Heart right ventricle (tissue), 16 donors: ENCODE measurements at regions of chr1 and their contacts with region 1.

Region 1: DNA sequence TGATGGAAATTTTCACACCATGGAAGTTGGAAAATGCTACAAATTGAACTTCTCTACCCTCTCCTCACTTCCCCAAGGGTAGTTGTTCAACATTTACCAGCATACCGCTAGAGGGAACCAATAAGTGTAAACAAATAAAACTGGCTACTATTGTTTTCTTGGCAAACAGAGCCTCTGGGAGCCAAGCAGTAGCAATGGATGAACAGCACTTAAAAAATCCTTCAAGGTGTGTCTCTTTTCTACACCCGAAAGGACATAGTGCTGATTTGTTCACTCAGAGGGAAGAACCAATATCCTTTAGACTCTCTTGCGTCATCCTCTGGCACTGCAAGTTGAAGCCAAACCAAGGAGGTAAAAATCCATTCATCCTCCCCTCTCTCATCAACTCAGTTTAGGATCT is 161.5 kb downstream of the TBX15 start:
- DNase-seq: no peak
- ATAC-seq: no peak
- H3K4me3 ChIP-seq: no peak overlapping the region
- H3K27ac ChIP-seq: no peak overlapping the region
- H3K4me1 ChIP-seq: no peaks in the 10 kb centered on the region
- H3K27me3 ChIP-seq: no peaks in the 10 kb centered on the region
- CTCF ChIP-seq: no peak

Region 2: GRCh38 chr1:118902711-118903191 is 76.1 kb after region 1 on chr1:
- intact Hi-C with region 1: loop called in 1 of 10 experiments (anchors 10 kb)
- DNase-seq: no peak
- ATAC-seq: no peak
- H3K4me3 ChIP-seq: no peak overlapping the region
- H3K27ac ChIP-seq: no peak overlapping the region
- H3K4me1 ChIP-seq: no peaks in the 10 kb centered on the region
- H3K27me3 ChIP-seq: peaks cover 0 to 3% (median 0%) of the 10 kb centered on the region in 7 donors
- CTCF ChIP-seq: no peak